Activated CD4-positive, alpha-beta memory T cell treated with anti-CD3 and anti-CD28 coated beads for 36 hours (primary cell): ENCODE measurements at regions of chr16 and their contacts with region 1.

Region 1: GRCh38 chr16:20741554-20742285 is at the start of gene THUMPD1:
- DNase-seq: peak; percentile 99
- H3K4me3 Mint-ChIP-seq: peak within 1 kb of the TSS; percentile 92
- H3K27ac Mint-ChIP-seq: peak within 1 kb of the TSS; percentile 95
- H3K4me1 Mint-ChIP-seq: peaks cover 23% of the 10 kb centered on the region
- H3K27me3 Mint-ChIP-seq: no peaks in the 10 kb centered on the region
- total RNA-seq, gene THUMPD1: 42.7 to 43.1 TPM

Region 2: GRCh38 chr16:20611975-20612481 is 129.7 kb before region 1 on chr16:
- CTCF ChIA-PET with region 1: no interaction called
- POLR2A ChIA-PET with region 1: no interaction called
- intact Hi-C with region 1: no loop called
- DNase-seq: no peak
- H3K4me3 Mint-ChIP-seq: no peak overlapping the region
- H3K27ac Mint-ChIP-seq: no peak overlapping the region
- H3K4me1 Mint-ChIP-seq: no peaks in the 10 kb centered on the region
- H3K27me3 Mint-ChIP-seq: peaks cover 19% of the 10 kb centered on the region

Region 3: GRCh38 chr16:20675488-20676267 is 66.0 kb before region 1 on chr16:
- CTCF ChIA-PET with region 1: interaction called, 4 read pairs
- POLR2A ChIA-PET with region 1: no interaction called
- intact Hi-C with region 1: loop called (anchors 5 kb)
- DNase-seq: peak; percentile 50
- H3K4me3 Mint-ChIP-seq: peak overlapping the region; percentile 68
- H3K27ac Mint-ChIP-seq: peak overlapping the region; percentile 11
- H3K4me1 Mint-ChIP-seq: peaks cover 32% of the 10 kb centered on the region
- H3K27me3 Mint-ChIP-seq: no peaks in the 10 kb centered on the region

Region 4: DNA sequence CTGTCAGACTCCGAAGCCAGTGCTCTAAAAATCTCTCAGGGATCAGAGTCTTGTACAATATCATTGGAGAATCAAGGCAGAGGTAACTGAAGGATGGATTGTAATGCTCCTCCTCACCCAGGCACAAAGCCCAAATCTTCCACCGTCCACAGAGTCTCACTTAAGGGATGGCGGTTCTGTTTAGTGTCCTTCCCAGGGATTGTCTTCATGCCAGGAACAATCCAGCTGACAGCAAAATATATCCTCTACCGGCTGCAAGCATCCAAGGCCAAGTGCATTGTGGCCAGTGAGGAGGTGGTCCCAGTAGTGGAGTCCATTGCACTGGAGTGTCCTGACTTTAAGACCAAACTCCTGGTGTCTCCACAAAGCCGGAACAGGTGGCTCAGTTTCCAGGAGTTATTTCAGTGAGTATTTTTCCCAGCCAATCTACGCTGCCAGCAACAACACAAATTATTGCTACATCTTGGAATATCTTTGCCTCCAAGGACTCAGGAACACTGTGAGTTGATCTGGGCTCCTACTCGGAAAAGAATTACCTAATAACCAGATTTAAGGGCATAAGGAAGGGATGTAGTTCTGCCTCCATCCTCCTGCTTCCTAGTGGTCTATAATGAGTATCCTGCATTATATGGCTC is 30.3 kb before region 1 on chr16:
- CTCF ChIA-PET with region 1: no interaction called
- POLR2A ChIA-PET with region 1: no interaction called
- intact Hi-C with region 1: no loop called
- DNase-seq: no peak
- H3K4me3 Mint-ChIP-seq: no peak overlapping the region
- H3K27ac Mint-ChIP-seq: no peak overlapping the region
- H3K4me1 Mint-ChIP-seq: no peaks in the 10 kb centered on the region
- H3K27me3 Mint-ChIP-seq: no peaks in the 10 kb centered on the region

Region 5: DNA sequence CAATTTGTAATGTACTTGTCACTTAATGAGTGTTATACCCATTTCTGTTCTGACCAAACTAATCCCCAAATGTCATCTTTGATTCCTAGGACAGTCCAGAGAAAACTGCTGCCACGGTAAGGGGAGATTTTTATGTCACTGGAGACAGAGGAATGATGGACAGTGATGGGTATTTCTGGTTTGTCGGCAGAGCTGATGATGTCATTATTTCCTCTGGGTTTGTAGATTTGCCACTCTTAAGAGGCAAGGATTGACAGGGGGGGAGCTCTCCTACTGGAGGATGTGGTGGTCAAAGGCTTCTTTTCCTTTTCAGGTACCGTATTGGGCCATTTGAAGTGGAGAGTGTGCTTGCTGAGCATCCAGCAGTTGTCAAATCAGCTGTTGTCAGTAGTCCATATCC is 12.6 kb before region 1 on chr16:
- CTCF ChIA-PET with region 1: interaction called, 11 read pairs
- POLR2A ChIA-PET with region 1: interaction called, 3 read pairs
- intact Hi-C with region 1: no loop called
- DNase-seq: no peak
- H3K4me3 Mint-ChIP-seq: no peak overlapping the region
- H3K27ac Mint-ChIP-seq: no peak overlapping the region
- H3K4me1 Mint-ChIP-seq: no peaks in the 10 kb centered on the region
- H3K27me3 Mint-ChIP-seq: no peaks in the 10 kb centered on the region

Region 6: GRCh38 chr16:20763461-20764232 is 21.9 kb after region 1 on chr16 and contains the start of gene ACSM3:
- CTCF ChIA-PET with region 1: interaction called, 5 read pairs
- POLR2A ChIA-PET with region 1: no interaction called
- intact Hi-C with region 1: loop called (anchors 1 kb)
- DNase-seq: peak; percentile 76
- H3K4me3 Mint-ChIP-seq: peak within 1 kb of the TSS; percentile 79
- H3K27ac Mint-ChIP-seq: peak within 1 kb of the TSS; percentile 87
- H3K4me1 Mint-ChIP-seq: peaks cover 20% of the 10 kb centered on the region
- H3K27me3 Mint-ChIP-seq: no peaks in the 10 kb centered on the region
- total RNA-seq, gene ACSM3: 13.8 to 17.4 TPM

Region 7: DNA sequence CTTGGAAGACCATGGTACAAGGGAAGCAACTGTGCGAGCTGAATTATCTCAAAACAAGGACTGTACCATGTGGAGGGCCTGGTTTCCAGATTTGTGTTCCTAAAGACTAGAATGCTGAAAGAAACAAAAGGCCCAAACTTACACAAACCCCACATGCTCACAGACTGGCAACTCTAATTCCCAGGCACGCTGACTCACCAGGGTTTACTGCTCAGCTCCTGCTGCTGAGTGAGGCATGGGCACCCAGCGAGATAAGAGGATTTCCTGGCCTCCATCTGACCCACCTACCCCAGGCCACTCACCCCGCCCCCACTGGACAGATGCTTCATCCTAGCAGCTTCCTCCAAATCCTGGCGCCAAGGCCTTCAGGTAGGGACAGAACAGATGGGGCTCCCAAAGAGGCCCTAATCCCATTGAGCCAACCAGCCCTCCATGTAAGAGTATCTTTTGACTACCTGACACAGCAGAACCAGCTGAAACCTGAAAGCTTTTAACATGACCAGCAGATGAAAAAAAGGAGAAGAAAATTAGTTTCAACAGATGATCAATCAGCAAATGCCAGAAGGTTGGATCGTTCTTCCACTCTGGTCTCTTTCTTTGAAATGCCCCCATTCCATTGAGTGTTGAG is 124.5 kb after region 1 on chr16:
- CTCF ChIA-PET with region 1: no interaction called
- POLR2A ChIA-PET with region 1: no interaction called
- intact Hi-C with region 1: no loop called
- DNase-seq: peak; percentile 51
- H3K4me3 Mint-ChIP-seq: no peak overlapping the region
- H3K27ac Mint-ChIP-seq: peak overlapping the region; percentile 66
- H3K4me1 Mint-ChIP-seq: peaks cover 26% of the 10 kb centered on the region
- H3K27me3 Mint-ChIP-seq: no peaks in the 10 kb centered on the region